ENCODE measurements at regions of chr2 and their contacts with region 1.

Region 1: GRCh38 chr2:85813982-85814801 is 60.4 kb downstream of the ATOH8 start:
- DNase-seq: peak; percentile 85

Region 2: DNA sequence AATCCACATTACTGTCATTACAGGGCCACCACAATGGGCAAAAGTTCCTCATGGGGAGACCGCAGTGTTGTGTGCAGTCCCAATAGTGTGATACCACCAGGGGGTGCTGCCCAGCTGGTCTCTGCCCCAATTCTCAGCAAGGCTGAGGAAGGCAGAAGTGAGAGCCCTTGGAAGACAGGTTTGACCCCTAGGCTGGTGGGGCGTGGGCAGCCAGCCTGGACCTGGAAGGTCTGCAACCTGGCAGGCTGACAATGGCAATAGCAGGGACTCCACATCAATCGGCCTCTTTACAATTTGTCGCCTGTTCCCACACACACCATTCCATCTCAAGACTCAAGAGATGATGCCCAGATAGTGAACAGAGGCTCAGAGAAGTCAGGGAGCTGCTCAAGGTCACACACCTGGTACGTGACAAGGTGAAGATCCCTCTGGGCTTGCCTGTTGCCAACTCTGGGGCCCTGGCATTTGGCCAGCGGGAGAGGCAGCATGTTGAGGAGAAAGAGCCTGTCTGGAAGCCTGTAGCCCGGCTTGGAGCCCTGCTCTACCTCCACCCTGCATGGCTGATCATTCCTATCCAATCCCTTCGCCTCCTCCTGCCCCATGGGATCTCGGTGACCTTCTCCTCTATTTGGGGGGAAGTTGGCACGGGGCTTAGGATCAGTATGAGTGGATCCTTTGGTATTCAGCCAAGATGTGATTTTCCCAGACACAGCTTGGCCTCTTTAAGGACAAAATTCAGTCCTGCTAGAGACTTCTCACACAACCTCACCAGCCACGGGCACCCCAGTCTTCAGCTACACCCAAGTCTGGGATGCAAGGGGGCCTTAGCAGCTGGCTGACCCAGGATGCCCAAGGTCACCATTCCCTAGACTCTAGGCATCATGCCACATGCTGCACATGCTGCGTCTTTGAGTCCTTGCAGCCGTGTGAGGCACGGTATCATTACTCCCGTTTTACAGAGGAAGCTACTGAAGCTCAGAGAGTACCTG is 63.3 kb before region 1 on chr2:
- CTCF ChIA-PET with region 1: interaction called, 44 read pairs
- POLR2A ChIA-PET with region 1: no interaction called
- DNase-seq: peak; percentile 71